ENCODE measurements at regions of chr15 and their contacts with region 1.

Region 1: GRCh38 chr15:55627730-55628368 is 39.7 kb upstream of the PYGO1 start:
- ATAC-seq: peak; percentile 35 to 100 (median 80)
- H3K4me3 ChIP-seq: no peak overlapping the region
- H3K27ac ChIP-seq: no peak overlapping the region
- H3K4me1 ChIP-seq: no peaks in the 10 kb centered on the region

Region 2: DNA sequence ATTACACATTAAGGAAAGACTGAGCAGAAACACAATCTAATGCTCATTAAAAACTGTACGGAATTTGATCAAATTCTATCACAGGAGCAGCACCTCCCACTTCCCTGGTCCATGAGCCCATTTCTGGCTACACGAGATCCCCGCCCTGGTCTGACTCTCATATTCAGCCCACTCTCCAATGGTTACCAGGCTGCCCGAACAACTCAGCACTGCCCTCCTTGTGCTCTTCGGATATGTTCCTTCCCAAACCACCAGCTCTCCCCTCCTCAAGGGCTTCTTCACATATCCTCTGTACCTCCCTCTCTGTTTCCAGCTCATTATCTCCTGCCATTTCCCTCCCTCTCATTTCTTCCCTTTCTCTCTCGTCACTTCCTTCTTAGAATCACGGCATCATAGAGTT is 611.6 kb before region 1 on chr15:
- in situ Hi-C with region 1: no loop called
- ATAC-seq: no peak
- H3K4me3 ChIP-seq: no peak overlapping the region
- H3K27ac ChIP-seq: no peak overlapping the region
- H3K4me1 ChIP-seq: peaks cover 0 to 5% of the 10 kb centered on the region in 2 donors

Region 3: GRCh38 chr15:55457401-55458022 is 170.3 kb before region 1 on chr15:
- in situ Hi-C with region 1: no loop called
- ATAC-seq: no peak
- H3K4me3 ChIP-seq: no peak overlapping the region
- H3K27ac ChIP-seq: no peak overlapping the region
- H3K4me1 ChIP-seq: no peaks in the 10 kb centered on the region

Region 4: GRCh38 chr15:55518641-55519040 is 109.2 kb before region 1 on chr15:
- in situ Hi-C with region 1: loop called in 3 of 9 experiments (anchors 10 to 25 kb)
- ATAC-seq: no peak
- H3K4me3 ChIP-seq: no peak overlapping the region
- H3K27ac ChIP-seq: no peak overlapping the region
- H3K4me1 ChIP-seq: no peaks in the 10 kb centered on the region

Region 5: DNA sequence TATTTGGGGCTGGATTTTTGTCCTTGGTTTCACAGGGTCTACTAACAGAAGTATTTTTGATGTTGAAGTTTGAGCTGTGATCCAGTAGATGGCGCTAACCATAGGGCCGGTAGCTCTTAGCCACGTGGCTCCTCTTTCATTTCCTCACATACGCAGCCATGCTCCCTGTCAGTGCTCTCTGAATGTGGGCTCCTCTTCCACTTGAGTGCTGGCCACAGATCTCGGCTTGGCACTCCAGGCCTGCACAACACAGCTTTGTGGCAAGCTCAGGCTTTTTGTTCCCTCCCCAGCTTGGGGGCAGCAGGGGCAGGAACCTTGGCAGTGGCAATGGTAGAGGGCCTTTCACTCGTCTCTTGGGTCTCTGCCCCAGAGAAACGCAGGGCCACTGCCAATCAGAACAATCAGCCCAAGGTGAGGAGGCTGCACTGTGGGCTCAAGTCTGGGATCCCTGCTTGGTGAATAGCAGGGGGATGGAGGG is 101.3 kb before region 1 on chr15:
- in situ Hi-C with region 1: loop called in 3 of 9 experiments (anchors 10 to 25 kb)
- ATAC-seq: peak in 5 of 8 experiments; percentile 24 to 91 (median 77)
- H3K4me3 ChIP-seq: no peak overlapping the region
- H3K27ac ChIP-seq: no peak overlapping the region
- H3K4me1 ChIP-seq: no peaks in the 10 kb centered on the region

Region 6: DNA sequence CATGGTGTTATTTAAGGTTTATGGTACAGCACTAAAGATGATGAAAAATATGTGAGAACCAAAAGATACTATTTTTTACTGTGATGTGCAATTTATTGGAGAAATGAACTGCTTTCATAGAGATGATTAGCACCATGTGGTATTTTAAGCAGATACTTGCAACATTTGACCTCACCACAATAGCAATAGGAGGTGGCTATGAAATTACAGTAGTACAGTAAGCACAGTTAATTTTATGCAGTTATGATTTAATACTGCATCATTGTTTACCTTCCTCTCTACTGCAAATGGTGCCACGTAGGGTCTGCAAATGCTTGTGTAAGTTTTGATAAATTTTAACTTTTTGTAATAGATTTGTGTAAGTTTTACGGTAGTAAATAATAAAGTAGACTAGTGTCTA is 53.8 kb before region 1 on chr15:
- in situ Hi-C with region 1: no loop called
- ATAC-seq: no peak
- H3K4me3 ChIP-seq: no peak overlapping the region
- H3K27ac ChIP-seq: no peak overlapping the region
- H3K4me1 ChIP-seq: no peaks in the 10 kb centered on the region

Region 7: GRCh38 chr15:55742927-55743728 is 115.3 kb after region 1 on chr15 and contains the start of gene PRTG:
- in situ Hi-C with region 1: no loop called
- ATAC-seq: peak; percentile 85 to 94 (median 91)
- H3K4me3 ChIP-seq: peak within 1 kb of the TSS; percentile 76 to 98 (median 89)
- H3K27ac ChIP-seq: peak within 1 kb of the TSS; percentile 94 to 96
- H3K4me1 ChIP-seq: peaks cover 9 to 25% of the 10 kb centered on the region in 2 donors
- total RNA-seq, gene PRTG: 0.31 to 65.0 (median 14.9) TPM

Region 8: DNA sequence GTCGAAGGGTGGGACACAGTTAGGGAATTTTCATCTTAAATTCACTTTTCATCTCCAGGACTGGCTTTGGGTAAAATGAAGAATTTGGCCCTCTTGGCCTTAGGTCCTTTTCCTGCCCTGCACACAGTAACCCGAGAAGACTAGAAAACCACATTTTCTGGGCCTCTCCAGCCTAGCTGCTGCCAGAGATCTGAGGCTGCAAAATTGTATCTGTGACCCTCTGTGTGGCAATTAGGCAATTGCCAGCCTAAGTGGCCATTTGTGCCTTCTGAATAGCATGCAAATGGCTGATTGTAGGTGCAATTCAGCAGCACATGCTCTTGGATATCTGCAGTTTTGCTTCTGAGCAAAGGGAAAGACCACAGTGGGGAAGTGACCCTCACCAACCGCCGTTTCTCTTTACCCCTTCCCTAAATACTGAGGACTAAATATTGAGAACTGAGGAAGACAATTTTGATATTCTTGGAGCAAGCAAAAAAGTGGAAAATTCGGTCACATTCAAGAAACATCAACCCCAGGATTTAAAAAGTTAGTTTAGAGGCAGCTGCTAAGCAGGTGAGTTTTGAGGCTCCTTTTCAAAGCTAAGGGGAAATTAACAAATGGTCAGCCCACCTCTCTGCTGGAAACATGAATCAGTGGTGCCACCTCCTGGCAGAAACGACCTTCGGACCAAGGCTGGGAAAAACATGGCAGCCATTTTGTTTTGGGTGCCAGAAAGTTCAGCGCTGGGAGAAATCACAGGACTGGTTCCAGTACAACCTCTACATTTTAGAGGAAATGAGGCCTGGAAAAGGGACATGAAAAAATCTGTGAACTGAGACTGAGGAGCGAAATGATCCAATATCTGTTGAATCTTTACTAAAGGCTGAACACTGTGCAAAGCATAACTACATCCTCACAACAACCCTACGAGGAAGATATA is 171.7 kb after region 1 on chr15:
- in situ Hi-C with region 1: loop called in 1 of 9 experiments (anchors 25 kb)
- ATAC-seq: peak; percentile 70 to 90 (median 84)
- H3K4me3 ChIP-seq: no peak overlapping the region
- H3K27ac ChIP-seq: no peak overlapping the region
- H3K4me1 ChIP-seq: peaks cover 6 to 12% of the 10 kb centered on the region in 2 donors

Region 9: DNA sequence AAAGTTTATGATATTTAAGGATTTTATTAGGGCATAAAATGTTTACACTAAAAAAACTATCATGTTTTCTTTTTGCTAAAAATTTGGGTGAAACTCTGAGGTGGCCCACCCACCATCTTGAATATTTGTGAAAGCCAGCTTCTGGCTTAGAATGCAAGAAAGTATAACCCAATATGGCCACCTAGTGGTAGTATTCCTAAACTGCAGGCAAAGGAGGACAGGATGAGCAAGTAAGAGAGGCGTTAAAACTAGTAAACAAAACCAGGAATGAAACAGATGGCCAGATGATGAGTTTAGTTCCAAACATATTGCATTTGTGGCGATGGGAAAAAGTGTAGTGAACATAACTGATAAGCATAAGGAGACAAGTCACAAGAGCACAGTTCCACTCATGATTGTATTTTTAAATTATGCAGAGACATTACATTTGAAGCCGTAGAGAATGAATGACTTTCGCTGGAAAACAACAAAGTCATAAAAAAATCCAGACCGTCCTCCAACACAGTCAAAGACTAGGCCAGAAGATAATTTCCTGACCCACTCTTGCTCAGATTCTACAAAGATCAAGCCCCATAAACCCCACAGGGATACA is 218.4 kb after region 1 on chr15:
- in situ Hi-C with region 1: loop called in 1 of 9 experiments (anchors 25 kb)
- ATAC-seq: peak; percentile 41 to 86 (median 58)
- H3K4me3 ChIP-seq: no peak overlapping the region
- H3K27ac ChIP-seq: no peak overlapping the region
- H3K4me1 ChIP-seq: no peaks in the 10 kb centered on the region